ENCODE measurements at regions of chr7 and their contacts with region 1.

Region 1: DNA sequence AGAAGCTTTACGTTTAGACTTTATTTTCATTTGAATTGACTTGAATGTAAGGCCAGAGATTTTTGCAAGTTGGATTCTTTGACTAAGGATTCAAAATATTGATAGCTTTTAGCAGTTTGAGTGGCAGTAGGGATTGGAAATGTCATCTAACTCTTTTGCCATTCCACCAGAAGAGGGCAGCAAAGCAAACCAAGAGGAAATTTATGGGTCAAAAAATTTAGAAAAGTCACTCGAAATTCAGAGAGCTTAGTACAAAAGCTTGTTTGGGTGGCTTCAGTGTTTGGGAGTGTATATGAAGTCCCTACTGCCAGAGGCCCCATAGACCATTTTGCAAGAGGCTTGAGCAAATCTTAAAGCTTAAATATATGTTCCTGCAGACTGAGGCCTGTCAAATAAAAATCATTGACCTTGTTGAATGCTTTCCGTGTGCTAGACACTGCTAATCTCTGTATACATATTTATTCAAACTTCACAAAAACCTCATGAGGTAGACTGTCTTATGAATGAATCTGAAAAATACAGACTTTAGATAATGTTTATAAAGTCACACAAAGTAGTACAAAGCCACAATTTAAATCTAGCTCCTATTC is 44.6 kb upstream of the RSBN1L start:
- DNase-seq: peak; percentile 54
- H3K4me3 ChIP-seq: no peak overlapping the region
- H3K27ac ChIP-seq: no peak overlapping the region
- H3K4me1 ChIP-seq: no peaks in the 10 kb centered on the region
- H3K27me3 ChIP-seq: no peaks in the 10 kb centered on the region
- CTCF ChIP-seq: peak; percentile 47 to 54
- POLR2A ChIP-seq: no peak

Region 2: DNA sequence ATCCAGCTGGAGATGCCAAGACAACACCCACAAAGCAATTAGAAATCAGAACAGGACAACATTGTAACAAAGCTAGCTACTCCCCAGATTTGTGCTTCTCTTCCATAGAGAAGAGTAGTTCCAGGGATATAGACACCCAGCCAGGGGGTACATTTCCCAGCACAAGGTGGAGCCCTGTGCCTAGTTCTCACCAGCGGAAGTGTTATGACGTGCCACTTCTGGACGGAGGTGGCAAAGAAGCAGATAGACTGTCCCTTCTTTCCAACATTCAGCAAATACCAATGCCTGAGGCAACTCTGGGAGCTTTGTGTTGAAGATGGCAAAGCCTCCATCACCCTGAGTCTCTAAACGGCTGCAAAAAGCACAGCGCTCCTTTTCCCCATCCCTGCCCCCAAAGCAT is 212.1 kb before region 1 on chr7:
- CTCF ChIA-PET with region 1: interaction called, 10 read pairs
- POLR2A ChIA-PET with region 1: no interaction called
- dilution Hi-C with region 1: no loop called
- intact Hi-C with region 1: no loop called
- DNase-seq: peak; percentile 41
- H3K4me3 ChIP-seq: no peak overlapping the region
- H3K27ac ChIP-seq: no peak overlapping the region
- H3K4me1 ChIP-seq: peaks cover 11% of the 10 kb centered on the region
- H3K27me3 ChIP-seq: no peaks in the 10 kb centered on the region
- CTCF ChIP-seq: peak; percentile 19 to 24
- POLR2A ChIP-seq: no peak

Region 3: GRCh38 chr7:77631820-77632219 is 19.8 kb before region 1 on chr7:
- CTCF ChIA-PET with region 1: interaction called, 13 read pairs
- POLR2A ChIA-PET with region 1: interaction called, 7 read pairs
- dilution Hi-C with region 1: no loop called
- intact Hi-C with region 1: no loop called
- DNase-seq: no peak
- H3K4me3 ChIP-seq: no peak overlapping the region
- H3K27ac ChIP-seq: no peak overlapping the region
- H3K4me1 ChIP-seq: no peaks in the 10 kb centered on the region
- H3K27me3 ChIP-seq: no peaks in the 10 kb centered on the region
- CTCF ChIP-seq: no peak
- POLR2A ChIP-seq: no peak

Region 4: GRCh38 chr7:77696198-77697028 is 44.7 kb after region 1 on chr7 and contains the start of gene RSBN1L:
- CTCF ChIA-PET with region 1: interaction called, 37 read pairs
- POLR2A ChIA-PET with region 1: no interaction called
- dilution Hi-C with region 1: no loop called
- intact Hi-C with region 1: no loop called
- DNase-seq: peak; percentile 99
- H3K4me3 ChIP-seq: peak within 1 kb of the TSS; percentile 90 to 97 (median 91)
- H3K27ac ChIP-seq: peak within 1 kb of the TSS; percentile 62
- H3K4me1 ChIP-seq: peaks cover 23% of the 10 kb centered on the region
- H3K27me3 ChIP-seq: no peaks in the 10 kb centered on the region
- CTCF ChIP-seq: peak; percentile 11 to 34
- POLR2A ChIP-seq: peak; percentile 88
- total RNA-seq, gene RSBN1L: 13.1 and 13.3 TPM in 2 replicates

Region 5: DNA sequence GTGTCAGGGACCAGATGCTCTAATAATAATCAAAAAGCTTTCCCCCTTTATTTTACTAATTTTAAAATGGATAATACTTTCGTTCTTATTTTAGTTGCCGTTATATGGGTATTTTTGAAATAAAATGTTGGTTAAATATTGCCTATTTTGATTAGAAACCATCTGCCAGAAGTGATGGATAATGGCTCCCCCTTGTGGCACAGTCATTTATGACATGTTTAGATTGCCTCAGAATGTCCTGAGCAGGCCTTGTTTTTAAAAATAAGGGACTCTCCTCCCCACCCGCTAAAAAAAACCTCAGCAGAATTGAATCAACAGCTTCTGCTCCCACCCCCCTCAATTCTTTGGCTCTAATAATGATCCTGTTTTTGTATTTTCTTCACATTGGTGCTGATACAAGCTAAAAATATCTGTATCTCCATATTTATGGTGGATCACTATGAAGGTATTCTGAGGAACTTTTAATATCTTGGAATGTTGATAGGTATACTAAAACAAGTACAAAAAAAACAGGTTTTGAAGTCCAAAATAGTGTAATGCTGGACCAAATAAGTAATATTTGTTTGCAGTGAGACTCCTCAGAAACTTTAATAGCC is 107.7 kb after region 1 on chr7:
- CTCF ChIA-PET with region 1: interaction called, 43 read pairs
- POLR2A ChIA-PET with region 1: no interaction called
- dilution Hi-C with region 1: no loop called
- intact Hi-C with region 1: loop called (anchors 1 kb)
- DNase-seq: peak; percentile 82
- H3K4me3 ChIP-seq: no peak overlapping the region
- H3K27ac ChIP-seq: no peak overlapping the region
- H3K4me1 ChIP-seq: no peaks in the 10 kb centered on the region
- H3K27me3 ChIP-seq: no peaks in the 10 kb centered on the region
- CTCF ChIP-seq: peak; percentile 55 to 66
- POLR2A ChIP-seq: no peak

Region 6: GRCh38 chr7:77940647-77941046 is 289.0 kb after region 1 on chr7:
- CTCF ChIA-PET with region 1: interaction called, 43 read pairs
- POLR2A ChIA-PET with region 1: no interaction called
- dilution Hi-C with region 1: no loop called
- intact Hi-C with region 1: loop called (anchors 5 kb)
- DNase-seq: peak; percentile 47
- H3K4me3 ChIP-seq: no peak overlapping the region
- H3K27ac ChIP-seq: no peak overlapping the region
- H3K4me1 ChIP-seq: peaks cover 2% of the 10 kb centered on the region
- H3K27me3 ChIP-seq: no peaks in the 10 kb centered on the region
- CTCF ChIP-seq: peak; percentile 33 to 49
- POLR2A ChIP-seq: no peak

Region 7: GRCh38 chr7:78176171-78176570 is 524.5 kb after region 1 on chr7:
- CTCF ChIA-PET with region 1: no interaction called
- POLR2A ChIA-PET with region 1: no interaction called
- dilution Hi-C with region 1: no loop called
- intact Hi-C with region 1: no loop called
- DNase-seq: no peak
- H3K4me3 ChIP-seq: no peak overlapping the region
- H3K27ac ChIP-seq: no peak overlapping the region
- H3K4me1 ChIP-seq: no peaks in the 10 kb centered on the region
- H3K27me3 ChIP-seq: no peaks in the 10 kb centered on the region
- CTCF ChIP-seq: no peak
- POLR2A ChIP-seq: no peak